ENCODE measurements at regions of chr3 and their contacts with region 1.

Region 1: DNA sequence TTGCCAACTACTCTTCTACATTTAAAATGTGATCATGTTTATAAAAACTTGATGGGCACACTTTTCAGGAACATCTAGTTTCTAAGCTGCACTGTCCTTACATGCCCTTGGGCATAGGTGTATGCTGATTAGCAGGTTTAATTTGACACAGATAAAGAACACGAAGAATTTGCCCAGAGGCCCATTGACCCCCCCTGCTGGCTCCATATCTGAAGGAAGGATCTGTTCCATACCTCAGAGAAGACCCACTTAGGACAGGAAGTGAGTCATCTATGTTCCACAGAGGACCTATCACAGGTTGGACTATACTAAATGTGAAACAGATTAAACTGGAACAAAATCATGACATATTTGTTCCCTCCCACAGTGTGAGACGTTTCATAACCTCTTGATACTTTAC is 92.8 kb upstream of the LPP start:
- DNase-seq: peak; percentile 92 to 99
- H3K4me3 ChIP-seq: no peak overlapping the region
- H3K27ac ChIP-seq: peak overlapping the region; percentile 46
- H3K4me1 ChIP-seq: peaks cover 36% of the 10 kb centered on the region
- H3K27me3 ChIP-seq: no peaks in the 10 kb centered on the region
- CTCF ChIP-seq: no peak

Region 2: DNA sequence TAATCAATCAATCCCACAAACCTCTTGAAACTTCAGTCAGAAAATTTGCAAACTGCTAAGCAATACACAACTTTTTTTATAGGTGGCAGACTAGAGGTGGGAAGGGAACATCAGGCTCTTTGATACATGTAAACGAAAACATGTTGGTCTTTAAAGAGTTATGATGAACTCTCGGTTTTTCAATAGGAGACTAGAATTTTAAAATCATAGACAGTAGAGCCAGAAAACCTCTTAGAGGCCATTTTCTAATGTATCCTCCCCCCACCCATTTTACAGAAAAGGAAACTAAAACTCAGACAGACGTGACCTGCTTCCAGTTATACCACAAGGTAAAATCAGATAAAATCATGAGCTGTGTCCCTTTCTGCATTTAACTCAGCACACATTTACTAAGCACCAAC is 86.3 kb before region 1 on chr3:
- CTCF ChIA-PET with region 1: no interaction called
- POLR2A ChIA-PET with region 1: no interaction called
- intact Hi-C with region 1: loop called (anchors 1 kb)
- DNase-seq: no peak
- H3K4me3 ChIP-seq: no peak overlapping the region
- H3K27ac ChIP-seq: peak overlapping the region; percentile 35
- H3K4me1 ChIP-seq: peaks cover 76% of the 10 kb centered on the region
- H3K27me3 ChIP-seq: no peaks in the 10 kb centered on the region
- CTCF ChIP-seq: peak; percentile 42; the same call in 1 of the 2 replicates

Region 3: GRCh38 chr3:188294823-188295487 is 233.8 kb after region 1 on chr3:
- CTCF ChIA-PET with region 1: no interaction called
- POLR2A ChIA-PET with region 1: no interaction called
- intact Hi-C with region 1: loop called (anchors 1 kb)
- DNase-seq: peak; percentile 63 to 99
- H3K4me3 ChIP-seq: peak overlapping the region; percentile 8; the same call in 1 of the 2 replicates
- H3K27ac ChIP-seq: peak overlapping the region; percentile 77
- H3K4me1 ChIP-seq: peaks cover 55% of the 10 kb centered on the region
- H3K27me3 ChIP-seq: no peaks in the 10 kb centered on the region
- CTCF ChIP-seq: no peak

Region 4: DNA sequence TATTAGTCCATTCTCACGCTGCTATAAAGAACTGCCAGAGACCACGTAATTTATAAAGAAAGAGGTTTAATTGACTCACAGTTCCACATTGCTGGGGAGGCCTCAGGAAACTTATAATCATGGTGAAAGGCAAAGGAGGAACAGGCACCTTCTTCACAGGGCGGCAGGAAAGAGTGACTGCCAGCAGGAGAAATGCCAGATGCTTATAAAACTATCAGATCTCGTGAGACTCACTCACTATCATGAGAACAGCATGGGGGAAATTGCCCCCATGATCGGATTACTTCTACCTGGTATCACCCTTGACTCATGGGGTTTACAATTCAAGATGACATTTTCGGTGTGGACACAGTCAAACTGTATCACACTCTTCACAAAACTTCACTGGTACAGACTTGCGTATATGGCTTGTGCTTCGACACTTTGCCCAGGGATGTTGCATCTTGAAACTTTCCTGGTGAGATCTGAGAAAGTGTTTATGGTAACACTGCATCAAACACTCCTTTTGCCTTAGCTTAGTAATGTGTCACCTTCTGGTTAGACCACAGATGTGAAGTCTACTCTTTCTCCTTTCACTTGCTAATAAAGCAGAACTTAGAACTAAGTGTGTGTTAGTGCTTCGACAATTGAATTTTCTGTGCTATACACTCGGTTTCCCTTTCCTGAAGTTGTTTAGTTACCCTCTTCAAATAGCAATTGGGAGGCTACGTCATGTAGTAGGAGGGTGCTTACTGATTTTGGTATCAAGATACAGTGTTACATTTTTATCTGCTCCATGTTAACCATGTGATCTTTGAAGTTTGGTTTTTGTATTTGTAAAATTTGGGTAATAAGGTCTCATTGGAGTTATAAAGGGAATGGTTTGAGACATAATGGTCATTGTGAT is 278.5 kb after region 1 on chr3:
- CTCF ChIA-PET with region 1: no interaction called
- POLR2A ChIA-PET with region 1: no interaction called
- intact Hi-C with region 1: no loop called
- DNase-seq: no peak
- H3K4me3 ChIP-seq: no peak overlapping the region
- H3K27ac ChIP-seq: no peak overlapping the region
- H3K4me1 ChIP-seq: no peaks in the 10 kb centered on the region
- H3K27me3 ChIP-seq: no peaks in the 10 kb centered on the region
- CTCF ChIP-seq: no peak

Region 5: DNA sequence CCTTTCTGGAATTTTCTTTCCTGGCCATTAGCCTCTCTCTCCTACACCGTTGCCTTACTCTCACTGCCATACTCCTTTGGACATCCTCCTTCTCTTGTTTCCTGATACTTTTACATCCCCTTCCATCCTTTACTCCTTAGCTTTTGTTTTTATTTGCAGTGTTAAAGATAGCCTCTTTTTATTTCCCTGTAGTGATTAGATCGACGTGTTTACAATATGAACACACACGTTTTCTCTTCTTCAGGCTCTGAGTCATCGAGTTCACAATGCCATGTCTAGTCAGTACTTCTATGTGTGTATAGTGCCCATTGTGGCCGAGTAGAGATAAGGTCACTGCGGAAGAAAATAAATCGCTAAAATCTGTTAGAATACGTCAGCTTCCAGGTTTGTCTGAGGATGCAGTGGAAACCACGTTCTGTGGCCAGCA is 301.3 kb after region 1 on chr3:
- CTCF ChIA-PET with region 1: no interaction called
- POLR2A ChIA-PET with region 1: no interaction called
- intact Hi-C with region 1: loop called (anchors 10 kb)
- DNase-seq: peak; percentile 41 to 87
- H3K4me3 ChIP-seq: no peak overlapping the region
- H3K27ac ChIP-seq: peak overlapping the region; percentile 17; the same call in 1 of the 2 replicates
- H3K4me1 ChIP-seq: peaks cover 9% of the 10 kb centered on the region
- H3K27me3 ChIP-seq: no peaks in the 10 kb centered on the region
- CTCF ChIP-seq: 0 out of 2 replicates have a peak, but pooled peaks have one; percentile 38

Region 6: GRCh38 chr3:188819939-188820338 is 758.8 kb after region 1 on chr3:
- CTCF ChIA-PET with region 1: no interaction called
- POLR2A ChIA-PET with region 1: no interaction called
- intact Hi-C with region 1: loop called (anchors 5 kb)
- DNase-seq: no peak
- H3K4me3 ChIP-seq: no peak overlapping the region
- H3K27ac ChIP-seq: no peak overlapping the region
- H3K4me1 ChIP-seq: peaks cover 33% of the 10 kb centered on the region
- H3K27me3 ChIP-seq: no peaks in the 10 kb centered on the region
- CTCF ChIP-seq: no peak